ENCODE measurements at regions of chr5 and their contacts with region 1.

Region 1: GRCh38 chr5:39822020-39822419 is 397.2 kb upstream of the DAB2 start:
- DNase-seq: no peak
- ATAC-seq: no peak
- H3K4me3 ChIP-seq: no peak overlapping the region
- H3K27ac ChIP-seq: no peak overlapping the region
- H3K4me1 ChIP-seq: no peaks in the 10 kb centered on the region
- H3K27me3 ChIP-seq: no peaks in the 10 kb centered on the region
- CTCF ChIP-seq: no peak

Region 2: GRCh38 chr5:40945111-40945510 is 1123.1 kb after region 1 on chr5:
- CTCF ChIA-PET with region 1: no interaction called
- POLR2A ChIA-PET with region 1: no interaction called
- in situ Hi-C with region 1: no loop called
- intact Hi-C with region 1: loop called (anchors 5 kb)
- DNase-seq: no peak
- ATAC-seq: no peak
- H3K4me3 ChIP-seq: no peak overlapping the region
- H3K27ac ChIP-seq: no peak overlapping the region
- H3K4me1 ChIP-seq: no peaks in the 10 kb centered on the region
- H3K27me3 ChIP-seq: no peaks in the 10 kb centered on the region
- CTCF ChIP-seq: no peak

Region 3: DNA sequence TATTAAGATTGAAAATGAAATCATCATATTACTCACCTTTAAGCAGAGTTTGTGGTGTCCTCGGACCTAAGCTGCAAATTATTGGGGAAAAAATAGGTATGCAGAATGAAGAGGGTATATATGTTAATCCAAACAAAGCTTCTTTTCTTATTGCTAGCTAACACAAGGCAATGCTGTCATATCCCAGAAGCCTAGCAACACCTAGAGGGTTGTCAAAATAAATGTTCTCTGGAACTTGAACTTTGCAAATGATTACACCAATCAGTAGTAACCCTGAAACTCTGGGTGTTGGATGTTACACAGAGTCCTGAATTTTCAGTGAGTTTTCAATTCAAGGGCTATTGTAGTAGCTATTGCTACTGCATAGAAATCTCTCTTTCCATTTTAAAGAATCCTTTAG is 1391.3 kb after region 1 on chr5 and contains the start of gene C6:
- CTCF ChIA-PET with region 1: no interaction called
- POLR2A ChIA-PET with region 1: no interaction called
- in situ Hi-C with region 1: no loop called
- intact Hi-C with region 1: no loop called
- DNase-seq: no peak
- ATAC-seq: no peak
- H3K4me3 ChIP-seq: no peak within 1 kb of the TSS
- H3K27ac ChIP-seq: no peak within 1 kb of the TSS
- H3K4me1 ChIP-seq: no peaks in the 10 kb centered on the region
- H3K27me3 ChIP-seq: no peaks in the 10 kb centered on the region
- CTCF ChIP-seq: no peak
- total RNA-seq, gene C6: 0.13 TPM

Measured in Panc1 (cell line).